ENCODE measurements at regions of chr1 and their contacts with region 1.

Region 1: DNA sequence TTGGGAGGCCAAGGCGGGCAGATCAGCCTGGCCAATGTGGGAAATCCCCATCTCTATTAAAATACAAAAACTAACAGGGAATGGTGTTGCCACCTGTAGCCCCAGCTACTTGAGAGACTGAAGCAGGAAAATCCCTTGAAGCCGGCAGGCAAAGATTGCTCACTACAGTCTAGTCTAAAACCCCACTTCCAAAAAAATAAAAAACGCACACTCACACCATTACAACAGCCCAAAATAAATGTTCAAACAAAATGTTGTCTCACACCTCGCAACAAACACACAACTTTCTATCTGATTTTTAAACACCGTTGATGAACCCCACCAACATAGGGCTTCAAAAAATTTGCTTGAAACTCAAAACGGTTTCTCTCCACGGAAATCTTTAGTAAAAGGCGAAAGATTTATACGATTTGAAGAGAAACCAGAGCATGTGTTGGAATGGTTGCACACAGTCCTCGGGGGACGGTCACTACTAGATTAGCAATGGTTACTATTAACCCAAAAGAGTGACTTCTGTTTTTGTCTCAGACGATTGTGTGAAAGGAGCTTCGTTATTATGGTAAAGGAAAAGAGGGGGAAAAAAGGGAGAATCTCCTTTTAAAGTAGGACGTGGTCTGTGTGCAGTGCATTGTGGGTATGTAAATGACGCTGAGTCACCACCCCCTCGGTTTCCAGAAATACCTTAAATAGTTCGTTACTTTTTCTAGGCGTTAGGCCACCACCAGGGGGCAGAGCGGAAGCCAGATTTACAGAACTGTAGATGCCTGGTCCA is at the start of gene RNU5D-1:
- DNase-seq: peak; percentile 93 to 97
- H3K4me3 ChIP-seq: no peak within 1 kb of the TSS
- H3K27ac ChIP-seq: peak within 1 kb of the TSS; percentile 86 to 95
- H3K4me1 ChIP-seq: no peaks in the 10 kb centered on the region
- H3K27me3 ChIP-seq: no peaks in the 10 kb centered on the region
- CTCF ChIP-seq: peak; percentile 67 to 84 (median 82)
- POLR2A ChIP-seq: peak; percentile 69 to 70
- total RNA-seq, gene RNU5D-1: not detected

Region 2: GRCh38 chr1:44985747-44986359 is 254.9 kb after region 1 on chr1:
- intact Hi-C with region 1: loop called (anchors 5 kb)
- DNase-seq: no peak
- H3K4me3 ChIP-seq: peak overlapping the region; percentile 66 to 86
- H3K27ac ChIP-seq: peak overlapping the region; percentile 40 to 73
- H3K4me1 ChIP-seq: no peaks in the 10 kb centered on the region
- H3K27me3 ChIP-seq: no peaks in the 10 kb centered on the region
- CTCF ChIP-seq: no peak
- POLR2A ChIP-seq: no peak